ENCODE measurements at regions of chr9 and their contacts with region 1.

Region 1: GRCh38 chr9:132946624-132947295 is 2.3 kb upstream of the TSC1 start:
- DNase-seq: no peak
- ATAC-seq: no peak
- H3K4me3 ChIP-seq: no peak overlapping the region
- H3K27ac ChIP-seq: no peak overlapping the region
- H3K4me1 ChIP-seq: peaks cover 12% of the 10 kb centered on the region
- H3K27me3 ChIP-seq: no peaks in the 10 kb centered on the region
- CTCF ChIP-seq: no peak

Region 2: GRCh38 chr9:131097948-131098278 is 1848.8 kb before region 1 on chr9:
- CTCF ChIA-PET with region 1: no interaction called
- POLR2A ChIA-PET with region 1: interaction called, 11 read pairs
- in situ Hi-C with region 1: no loop called
- intact Hi-C with region 1: no loop called
- DNase-seq: no peak
- ATAC-seq: no peak
- H3K4me3 ChIP-seq: no peak overlapping the region
- H3K27ac ChIP-seq: no peak overlapping the region
- H3K4me1 ChIP-seq: 0 out of 2 replicates have a peak, but pooled peaks cover 5% of the 10 kb centered on the region
- H3K27me3 ChIP-seq: no peaks in the 10 kb centered on the region
- CTCF ChIP-seq: no peak

Region 3: DNA sequence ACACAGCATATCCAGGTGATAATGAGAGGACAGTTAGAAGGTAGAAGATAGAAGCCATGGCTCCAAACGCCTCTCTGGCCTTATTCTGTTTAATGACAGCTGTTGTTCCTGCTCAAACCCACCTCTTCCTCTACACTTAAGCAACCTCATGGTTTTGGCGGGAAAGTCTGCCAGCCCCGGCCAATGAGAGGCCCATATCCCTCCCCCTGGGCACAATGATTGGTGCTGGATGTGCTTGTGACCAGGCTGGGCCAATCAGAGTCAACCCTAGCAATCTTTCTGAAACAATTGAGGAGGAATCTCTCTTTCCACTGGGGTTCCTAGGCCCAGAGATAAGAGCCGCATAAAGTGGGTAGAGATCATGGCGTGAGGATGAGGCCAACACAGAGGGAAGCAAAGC is 27.0 kb after region 1 on chr9:
- CTCF ChIA-PET with region 1: interaction called, 10 read pairs
- POLR2A ChIA-PET with region 1: no interaction called
- in situ Hi-C with region 1: no loop called
- intact Hi-C with region 1: no loop called
- DNase-seq: no peak
- ATAC-seq: no peak; the same call in 1 of the 2 replicates
- H3K4me3 ChIP-seq: no peak overlapping the region
- H3K27ac ChIP-seq: no peak overlapping the region
- H3K4me1 ChIP-seq: no peaks in the 10 kb centered on the region
- H3K27me3 ChIP-seq: peaks cover 2% of the 10 kb centered on the region; the same call in 1 of the 2 replicates
- CTCF ChIP-seq: no peak

Measured in Panc1 (cell line).